AG04450 (cell line): ENCODE measurements at regions of chr7 and their contacts with region 1.

Region 1: DNA sequence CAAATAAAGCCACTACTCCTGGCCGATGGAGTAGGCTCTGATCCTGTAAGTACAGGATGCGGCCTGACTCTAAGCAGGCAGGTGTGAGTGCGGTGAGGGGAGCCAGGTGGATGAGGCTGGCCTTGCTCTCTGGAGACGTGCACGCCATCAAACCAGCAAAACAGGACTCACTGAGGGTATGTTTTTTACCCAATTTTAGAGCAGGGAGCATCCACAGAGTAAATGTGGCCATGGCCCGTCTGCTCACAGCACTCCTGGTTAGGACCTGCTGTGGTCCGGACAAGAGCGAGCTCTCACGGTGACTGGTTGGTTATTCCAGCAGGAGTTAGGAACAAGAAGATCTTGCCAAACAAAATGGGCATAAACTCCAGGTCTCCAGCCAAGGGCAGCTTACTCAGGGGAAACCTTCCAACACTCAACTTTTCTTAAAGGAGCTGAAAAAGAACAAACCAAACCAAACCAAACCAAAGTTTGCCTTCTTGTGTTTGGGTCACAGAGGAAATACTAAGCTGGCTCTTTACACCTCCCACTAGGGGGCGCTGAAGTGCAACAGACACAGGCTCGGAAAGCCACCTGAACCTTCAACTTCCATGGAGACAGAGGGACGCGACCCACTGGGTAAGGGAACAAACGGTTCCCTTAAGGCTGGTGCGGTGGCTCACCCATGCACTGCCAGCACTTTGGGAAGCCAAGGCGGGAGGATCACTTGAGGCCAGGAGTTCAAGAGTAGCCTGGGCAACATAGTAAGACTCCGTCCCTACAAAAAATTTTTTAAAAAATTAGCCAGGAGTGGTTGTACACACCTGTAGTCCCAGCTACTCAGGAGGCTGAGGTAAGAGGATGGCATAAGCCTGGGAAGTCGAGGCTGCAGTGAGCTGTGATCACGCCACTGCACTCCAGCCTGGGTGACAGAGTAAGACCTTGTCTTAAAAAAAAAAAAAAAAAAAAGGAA is 122.4 kb downstream of the CLEC2L start:
- DNase-seq: peak; percentile 36
- H3K4me3 ChIP-seq: no peak overlapping the region
- H3K27ac ChIP-seq: no peak overlapping the region
- H3K27me3 ChIP-seq: no peaks in the 10 kb centered on the region
- CTCF ChIP-seq: peak; percentile 91

Region 2: GRCh38 chr7:139620676-139621344 is 25.0 kb before region 1 on chr7:
- CTCF ChIA-PET with region 1: interaction called, 37 read pairs
- POLR2A ChIA-PET with region 1: no interaction called
- DNase-seq: no peak
- H3K4me3 ChIP-seq: no peak overlapping the region
- H3K27ac ChIP-seq: no peak overlapping the region
- H3K27me3 ChIP-seq: no peaks in the 10 kb centered on the region
- CTCF ChIP-seq: peak; percentile 65

Region 3: GRCh38 chr7:139635526-139636302 is 10.1 kb before region 1 on chr7:
- CTCF ChIA-PET with region 1: interaction called, 32 read pairs
- POLR2A ChIA-PET with region 1: no interaction called
- DNase-seq: no peak
- H3K4me3 ChIP-seq: no peak overlapping the region
- H3K27ac ChIP-seq: no peak overlapping the region
- H3K27me3 ChIP-seq: no peaks in the 10 kb centered on the region
- CTCF ChIP-seq: no peak

Region 4: DNA sequence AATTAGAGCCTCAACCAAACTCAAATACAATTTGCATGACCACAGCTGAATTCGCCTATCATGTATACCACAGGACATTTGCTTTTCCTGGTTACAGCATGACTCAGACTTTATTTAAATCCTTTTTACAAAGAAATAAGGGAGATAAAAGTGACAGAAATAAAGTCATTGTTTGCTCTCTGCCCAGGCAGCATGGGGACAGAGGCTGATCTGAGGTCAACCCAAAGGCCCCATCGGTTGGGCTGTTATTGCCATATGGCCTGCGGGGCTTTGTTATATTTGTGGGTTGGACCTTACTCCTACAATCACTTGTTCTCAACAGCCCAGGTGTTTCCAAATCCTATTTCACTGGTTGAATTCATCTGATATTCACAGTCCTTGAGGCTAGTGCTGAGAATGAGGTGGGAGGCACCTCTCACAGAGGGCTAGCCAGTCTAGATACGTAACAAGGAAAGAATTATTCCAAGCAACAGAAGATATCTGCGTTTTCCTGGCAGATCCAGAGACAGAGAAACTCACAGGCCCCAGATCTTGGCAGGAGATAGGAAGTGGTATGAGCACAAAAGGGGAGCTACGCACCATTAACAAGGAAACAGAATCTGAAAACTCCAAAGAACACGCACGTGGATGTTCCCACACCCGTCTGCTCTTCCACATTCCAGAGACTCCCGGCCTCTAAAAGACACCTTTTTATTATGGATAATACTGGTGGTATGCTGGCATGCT is 14.6 kb after region 1 on chr7:
- CTCF ChIA-PET with region 1: interaction called, 20 read pairs
- POLR2A ChIA-PET with region 1: no interaction called
- DNase-seq: no peak
- H3K4me3 ChIP-seq: no peak overlapping the region
- H3K27ac ChIP-seq: no peak overlapping the region
- H3K27me3 ChIP-seq: no peaks in the 10 kb centered on the region
- CTCF ChIP-seq: no peak

Region 5: GRCh38 chr7:139741791-139742344 is 96.0 kb after region 1 on chr7:
- CTCF ChIA-PET with region 1: interaction called, 10 read pairs
- POLR2A ChIA-PET with region 1: no interaction called
- DNase-seq: no peak
- H3K4me3 ChIP-seq: no peak overlapping the region
- H3K27ac ChIP-seq: no peak overlapping the region
- H3K27me3 ChIP-seq: no peaks in the 10 kb centered on the region
- CTCF ChIP-seq: no peak

Region 6: GRCh38 chr7:139771001-139771970 is 125.4 kb after region 1 on chr7:
- CTCF ChIA-PET with region 1: interaction called, 12 read pairs
- POLR2A ChIA-PET with region 1: interaction called, 3 read pairs
- DNase-seq: peak; percentile 60
- H3K4me3 ChIP-seq: peak overlapping the region; percentile 26
- H3K27ac ChIP-seq: peak overlapping the region; percentile 42
- H3K27me3 ChIP-seq: no peaks in the 10 kb centered on the region
- CTCF ChIP-seq: no peak

Region 7: DNA sequence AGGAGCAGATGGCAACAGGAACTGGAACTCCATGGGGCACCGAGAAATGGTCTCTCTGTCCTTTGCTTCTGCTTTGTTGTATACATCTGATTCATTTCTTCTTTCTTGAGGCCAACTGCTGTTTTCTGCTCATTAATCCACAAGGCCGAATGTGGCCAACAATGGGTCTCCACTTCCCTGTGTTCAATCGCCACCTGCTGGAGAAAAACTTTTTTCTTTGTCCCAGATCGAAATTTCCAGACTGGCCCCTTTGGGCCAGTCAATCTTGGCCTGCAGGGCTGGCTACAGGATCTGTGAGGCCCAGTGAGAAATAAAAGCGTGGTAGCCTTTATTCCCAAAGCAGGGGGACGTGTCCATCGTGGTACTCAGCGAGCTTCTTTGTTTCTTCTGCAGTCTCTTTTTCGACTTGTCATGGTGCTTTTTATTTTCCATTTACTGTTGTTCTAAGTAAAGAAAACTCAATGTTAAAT is 358.1 kb after region 1 on chr7:
- CTCF ChIA-PET with region 1: interaction called, 71 read pairs
- POLR2A ChIA-PET with region 1: no interaction called
- DNase-seq: peak; percentile 56
- H3K4me3 ChIP-seq: no peak overlapping the region
- H3K27ac ChIP-seq: no peak overlapping the region
- H3K27me3 ChIP-seq: no peaks in the 10 kb centered on the region
- CTCF ChIP-seq: peak; percentile 71